ENCODE measurements at regions of chr10 and their contacts with region 1.

Region 1: GRCh38 chr10:62816331-62817120 is at the start of gene EGR2:
- DNase-seq: peak; percentile 96
- ATAC-seq: peak; percentile 75
- H3K4me3 Mint-ChIP-seq: peak within 1 kb of the TSS; percentile 92
- H3K27ac Mint-ChIP-seq: peak within 1 kb of the TSS; percentile 94
- H3K4me1 Mint-ChIP-seq: peaks cover 56% of the 10 kb centered on the region
- H3K27me3 Mint-ChIP-seq: peaks cover 8% of the 10 kb centered on the region
- CTCF ChIP-seq: no peak
- total RNA-seq, gene EGR2: 6.1 and 9.4 TPM in 2 replicates

Region 2: DNA sequence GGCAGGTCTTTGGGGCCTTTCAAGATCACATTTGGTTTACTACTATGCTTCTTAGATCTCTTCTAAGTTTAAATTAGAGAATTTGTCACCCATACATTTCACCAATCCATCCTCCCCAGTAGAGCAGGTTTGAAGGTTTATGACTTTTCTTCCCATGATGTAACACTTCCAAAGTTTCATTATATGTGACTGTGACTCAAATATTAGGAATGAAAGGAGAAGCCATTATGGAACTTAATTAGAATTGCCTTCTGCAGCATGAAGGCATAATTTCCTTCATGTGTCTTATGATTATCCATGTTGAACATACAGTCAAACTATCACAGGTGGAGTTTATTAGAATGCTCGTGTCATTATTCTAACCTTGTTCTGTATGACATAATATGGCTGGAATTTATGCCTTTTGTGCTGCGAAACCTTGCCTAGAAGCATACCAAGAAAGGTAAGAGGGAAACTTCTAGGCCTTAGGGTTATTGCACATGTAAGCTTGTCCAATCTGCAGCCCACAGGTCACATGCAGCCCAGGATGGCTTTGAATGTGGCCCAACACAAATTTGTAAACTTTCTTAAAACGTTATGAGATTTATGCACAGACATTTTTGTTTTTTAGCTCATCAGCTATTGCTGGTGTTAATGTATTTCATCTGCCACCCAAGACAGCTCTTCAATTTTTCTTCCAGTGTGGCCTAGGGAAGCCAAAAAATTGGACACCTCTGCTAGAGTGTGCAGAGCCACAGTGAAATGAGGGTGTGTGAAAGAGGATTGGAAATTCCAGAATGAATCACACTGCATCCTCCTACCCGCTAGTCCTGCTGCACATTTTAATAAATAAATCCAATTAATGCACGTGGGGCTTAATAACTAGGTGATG is 1496.9 kb before region 1 on chr10:
- CTCF ChIA-PET with region 1: no interaction called
- POLR2A ChIA-PET with region 1: no interaction called
- intact Hi-C with region 1: no loop called
- DNase-seq: no peak
- ATAC-seq: no peak
- H3K4me3 Mint-ChIP-seq: no peak overlapping the region
- H3K27ac Mint-ChIP-seq: no peak overlapping the region
- H3K4me1 Mint-ChIP-seq: peaks cover 9% of the 10 kb centered on the region
- H3K27me3 Mint-ChIP-seq: no peaks in the 10 kb centered on the region
- CTCF ChIP-seq: no peak

Region 3: DNA sequence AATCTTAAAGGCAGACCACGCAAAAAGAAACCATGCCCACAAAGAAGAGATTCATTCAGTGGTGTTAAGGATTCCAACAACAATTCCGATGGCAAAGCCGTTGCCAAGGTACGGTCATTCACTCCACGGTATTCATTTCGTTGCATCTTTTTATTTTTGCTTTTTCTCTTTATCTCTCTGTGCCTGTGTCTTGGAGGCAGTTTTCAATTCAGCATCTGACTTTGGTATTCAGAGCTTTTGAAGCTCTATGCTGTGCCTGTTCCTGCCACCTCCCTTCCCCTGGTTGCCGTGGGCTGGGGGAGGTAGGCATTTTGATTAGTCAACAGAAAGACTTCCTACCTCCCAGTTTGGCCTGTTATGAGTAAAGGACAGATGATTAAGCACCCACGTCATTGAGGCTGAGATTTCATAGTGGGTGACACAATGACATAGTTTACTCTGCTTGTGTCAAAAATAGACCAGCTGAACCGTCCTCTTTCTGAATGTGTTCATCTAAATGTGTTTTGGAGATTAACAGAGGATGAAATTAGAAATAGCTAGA is 765.6 kb before region 1 on chr10:
- CTCF ChIA-PET with region 1: no interaction called
- POLR2A ChIA-PET with region 1: no interaction called
- intact Hi-C with region 1: loop called (anchors 10 kb)
- DNase-seq: no peak
- ATAC-seq: peak; percentile 60
- H3K4me3 Mint-ChIP-seq: peak overlapping the region; percentile 85
- H3K27ac Mint-ChIP-seq: peak overlapping the region; percentile 93
- H3K4me1 Mint-ChIP-seq: peaks cover 100% of the 10 kb centered on the region
- H3K27me3 Mint-ChIP-seq: no peaks in the 10 kb centered on the region
- CTCF ChIP-seq: no peak

Region 4: DNA sequence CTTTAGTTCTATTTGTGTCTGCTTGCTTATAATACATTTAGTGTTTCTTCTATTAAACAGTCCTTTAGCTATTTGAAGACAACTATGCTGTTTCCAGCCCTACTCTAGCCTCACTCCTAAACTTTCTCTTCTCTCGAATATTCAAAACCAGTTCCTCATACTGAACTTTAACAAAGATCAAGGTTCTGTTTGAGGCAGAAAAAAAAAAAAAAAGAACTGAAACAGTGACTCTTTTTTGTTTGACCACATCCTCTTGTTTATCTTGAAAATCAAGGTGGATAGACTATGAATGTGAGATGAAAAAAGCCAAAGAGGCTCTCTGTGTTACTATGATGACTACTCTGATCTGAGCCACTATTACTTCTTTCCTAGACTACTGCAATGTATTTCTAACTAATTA is 288.1 kb before region 1 on chr10:
- CTCF ChIA-PET with region 1: interaction called, 6 read pairs
- POLR2A ChIA-PET with region 1: interaction called, 6 read pairs
- intact Hi-C with region 1: loop called (anchors 1 kb)
- DNase-seq: no peak
- ATAC-seq: peak; percentile 59
- H3K4me3 Mint-ChIP-seq: peak overlapping the region; percentile 64
- H3K27ac Mint-ChIP-seq: peak overlapping the region; percentile 92
- H3K4me1 Mint-ChIP-seq: peaks cover 58% of the 10 kb centered on the region
- H3K27me3 Mint-ChIP-seq: no peaks in the 10 kb centered on the region
- CTCF ChIP-seq: no peak

Region 5: GRCh38 chr10:62632071-62632809 is 184.3 kb before region 1 on chr10:
- CTCF ChIA-PET with region 1: interaction called, 7 read pairs
- POLR2A ChIA-PET with region 1: interaction called, 14 read pairs
- intact Hi-C with region 1: loop called (anchors 1 kb)
- DNase-seq: no peak
- ATAC-seq: peak; percentile 81
- H3K4me3 Mint-ChIP-seq: peak overlapping the region; percentile 83
- H3K27ac Mint-ChIP-seq: peak overlapping the region; percentile 98
- H3K4me1 Mint-ChIP-seq: peaks cover 58% of the 10 kb centered on the region
- H3K27me3 Mint-ChIP-seq: no peaks in the 10 kb centered on the region
- CTCF ChIP-seq: no peak

Region 6: GRCh38 chr10:62732841-62733653 is 83.5 kb before region 1 on chr10:
- CTCF ChIA-PET with region 1: interaction called, 34 read pairs
- POLR2A ChIA-PET with region 1: interaction called, 25 read pairs
- intact Hi-C with region 1: loop called (anchors 1 kb)
- DNase-seq: peak; percentile 46
- ATAC-seq: peak; percentile 77
- H3K4me3 Mint-ChIP-seq: peak overlapping the region; percentile 62
- H3K27ac Mint-ChIP-seq: no peak overlapping the region
- H3K4me1 Mint-ChIP-seq: peaks cover 2% of the 10 kb centered on the region
- H3K27me3 Mint-ChIP-seq: no peaks in the 10 kb centered on the region
- CTCF ChIP-seq: no peak

Region 7: DNA sequence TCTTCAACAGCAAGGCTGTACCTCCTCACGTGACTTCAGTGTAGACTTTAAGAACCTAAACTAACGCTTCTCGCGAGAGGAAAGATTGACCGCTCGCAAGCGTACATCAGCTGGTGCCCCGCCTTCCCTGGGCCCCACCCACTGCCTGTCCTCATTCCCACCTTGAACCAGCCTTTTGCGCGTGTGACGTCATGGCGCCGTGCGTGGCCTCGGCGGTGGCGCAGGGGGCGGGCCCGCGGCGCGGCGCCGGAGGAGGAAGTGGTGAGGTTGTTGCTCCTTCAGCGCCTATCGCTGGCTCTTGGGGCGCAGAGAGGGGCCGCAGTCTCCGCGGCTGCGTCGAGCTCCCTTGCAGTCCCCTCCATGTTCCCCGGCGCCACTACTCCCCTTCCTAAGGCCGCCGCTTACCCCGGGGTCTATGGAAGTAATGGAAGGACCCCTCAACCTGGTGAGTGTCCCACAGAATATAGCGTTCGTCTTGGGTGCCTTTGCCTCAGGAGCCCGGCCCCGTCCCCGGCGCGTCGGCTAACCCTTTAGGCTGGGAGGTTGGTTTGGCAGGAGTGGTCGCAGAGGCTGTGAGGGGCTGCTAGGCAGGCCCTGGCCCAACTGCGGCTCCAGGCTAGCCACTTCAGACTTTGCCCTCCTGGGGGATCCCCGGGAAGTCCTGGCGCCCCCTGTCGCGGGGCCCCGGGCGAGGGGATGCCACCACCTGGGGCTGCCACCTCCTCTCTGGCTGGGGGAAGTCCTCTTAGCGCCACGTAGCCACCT is 316.7 kb after region 1 on chr10 and contains the start of gene NRBF2:
- CTCF ChIA-PET with region 1: interaction called, 6 read pairs
- POLR2A ChIA-PET with region 1: interaction called, 7 read pairs
- intact Hi-C with region 1: loop called (anchors 1 kb)
- DNase-seq: peak; percentile 97
- ATAC-seq: peak; percentile 88
- H3K4me3 Mint-ChIP-seq: peak within 1 kb of the TSS; percentile 93
- H3K27ac Mint-ChIP-seq: peak within 1 kb of the TSS; percentile 92
- H3K4me1 Mint-ChIP-seq: peaks cover 44% of the 10 kb centered on the region
- H3K27me3 Mint-ChIP-seq: no peaks in the 10 kb centered on the region
- CTCF ChIP-seq: no peak
- total RNA-seq, gene NRBF2: 23.8 and 26.9 TPM in 2 replicates

Region 8: GRCh38 chr10:63720072-63720537 is 903.6 kb after region 1 on chr10:
- CTCF ChIA-PET with region 1: interaction called, 3 read pairs
- POLR2A ChIA-PET with region 1: no interaction called
- intact Hi-C with region 1: loop called (anchors 2 kb)
- DNase-seq: no peak
- ATAC-seq: peak; percentile 94
- H3K4me3 Mint-ChIP-seq: no peak overlapping the region
- H3K27ac Mint-ChIP-seq: no peak overlapping the region
- H3K4me1 Mint-ChIP-seq: peaks cover 12% of the 10 kb centered on the region
- H3K27me3 Mint-ChIP-seq: peaks cover 12% of the 10 kb centered on the region
- CTCF ChIP-seq: peak; percentile 100